Kidney (tissue), 22 donors: ENCODE measurements at regions of chr20 and their contacts with region 1.

Region 1: GRCh38 chr20:49132995-49133478 is 55.1 kb downstream of the STAU1 start:
- DNase-seq: peak in 4 of 5 donors; percentile 30 to 93 (median 72)
- H3K4me3 ChIP-seq: no peak overlapping the region
- H3K27ac ChIP-seq: no peak overlapping the region
- H3K4me1 ChIP-seq: peaks cover 2 to 7% (median 3%) of the 10 kb centered on the region in 3 donors
- H3K27me3 ChIP-seq: no peaks in the 10 kb centered on the region
- CTCF ChIP-seq: peak; percentile 64

Region 2: GRCh38 chr20:49219089-49219923 is 86.3 kb after region 1 on chr20 and contains the start of gene DDX27:
- intact Hi-C with region 1: loop called (anchors 5 kb)
- DNase-seq: peak; percentile 99 to 100 (median 99)
- H3K4me3 ChIP-seq: peak within 1 kb of the TSS; percentile 83 to 99 (median 97)
- H3K27ac ChIP-seq: peak within 1 kb of the TSS; percentile 37 to 82
- H3K4me1 ChIP-seq: peaks cover 0 to 7% (median 6%) of the 10 kb centered on the region in 3 donors
- H3K27me3 ChIP-seq: no peaks in the 10 kb centered on the region
- CTCF ChIP-seq: no peak
- total RNA-seq, gene DDX27: 30.6 TPM